Aorta (tissue), 5 donors: ENCODE measurements at regions of chr2 and their contacts with region 1.

Region 1: GRCh38 chr2:45330637-45331409 is 280.2 kb downstream of the SRBD1 start:
- DNase-seq: no peak
- ATAC-seq: no peak
- H3K4me3 ChIP-seq: no peak overlapping the region
- H3K27ac ChIP-seq: no peak overlapping the region
- H3K4me1 ChIP-seq: no peaks in the 10 kb centered on the region
- H3K27me3 ChIP-seq: no peaks in the 10 kb centered on the region

Region 2: GRCh38 chr2:43905371-43905803 is 1425.4 kb before region 1 on chr2:
- intact Hi-C with region 1: loop called in 1 of 2 experiments (anchors 10 kb)
- DNase-seq: no peak
- ATAC-seq: no peak
- H3K4me3 ChIP-seq: no peak overlapping the region
- H3K27ac ChIP-seq: no peak overlapping the region
- H3K4me1 ChIP-seq: no peaks in the 10 kb centered on the region
- H3K27me3 ChIP-seq: no peaks in the 10 kb centered on the region